ENCODE measurements at regions of chr11 and their contacts with region 1.

Region 1: DNA sequence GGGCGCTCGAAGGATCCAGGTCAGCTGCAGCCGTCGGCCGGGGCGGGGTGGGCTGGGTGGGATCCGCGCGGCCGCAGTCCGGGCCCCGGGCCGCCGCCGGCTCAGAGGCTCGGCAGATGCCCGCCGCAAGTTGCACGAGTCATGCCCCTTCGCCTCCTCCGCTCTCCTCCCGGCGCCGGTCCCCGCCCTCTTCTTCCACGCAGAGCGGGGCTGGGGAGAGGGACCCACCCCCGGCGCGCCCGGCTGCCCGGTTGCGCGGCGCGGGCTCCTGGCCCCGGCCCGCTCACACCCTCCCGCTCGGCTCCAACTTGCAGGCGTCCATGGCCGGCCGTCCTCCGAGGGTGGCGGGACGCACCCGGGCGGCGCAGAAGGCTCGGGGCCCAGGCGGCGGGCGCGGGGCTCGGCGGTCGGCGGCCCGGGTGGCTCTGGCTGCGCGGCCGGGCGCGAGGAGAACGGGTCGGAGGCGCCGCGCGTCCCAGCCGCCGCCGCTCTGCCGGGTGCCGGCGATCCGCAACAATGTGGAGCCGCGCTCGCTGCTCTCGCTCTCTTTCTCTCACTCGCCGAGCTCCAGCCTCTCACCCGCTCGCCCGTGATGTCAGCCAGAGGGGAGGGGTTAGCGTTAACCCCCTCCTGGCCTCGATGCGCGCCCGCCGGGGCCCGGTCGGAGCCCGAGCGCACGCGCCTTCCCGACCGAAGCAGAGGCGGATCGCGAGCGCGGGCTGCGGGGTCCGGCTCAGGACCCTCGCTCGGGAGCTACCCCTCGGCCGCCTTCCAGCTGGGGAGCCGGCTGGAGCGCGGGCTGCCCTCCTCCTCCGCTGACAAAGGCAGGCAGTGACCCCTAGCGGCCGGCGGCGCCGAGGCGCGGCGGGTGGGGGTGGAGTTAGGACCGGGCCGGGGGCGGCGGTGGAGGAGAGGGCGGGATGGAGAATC is at the start of gene NECTIN1:
- DNase-seq: peak; percentile 84 to 88 (median 86)
- H3K4me3 ChIP-seq: peak within 1 kb of the TSS; percentile 47 to 69
- H3K4me3 Mint-ChIP-seq: peak within 1 kb of the TSS; percentile 93 to 98 (median 95)
- H3K27ac ChIP-seq: peak within 1 kb of the TSS; percentile 37
- H3K27ac Mint-ChIP-seq: peak within 1 kb of the TSS; percentile 80 to 95 (median 89)
- H3K4me1 ChIP-seq: peaks cover 20% of the 10 kb centered on the region
- H3K4me1 Mint-ChIP-seq: peaks cover 6 to 22% (median 14%) of the 10 kb centered on the region in 4 donors
- H3K27me3 ChIP-seq: peaks cover 10% of the 10 kb centered on the region
- H3K27me3 Mint-ChIP-seq: peaks cover 10 to 13% of the 10 kb centered on the region in 2 donors
- total RNA-seq, gene NECTIN1: 3.5 to 3.8 TPM

Region 2: DNA sequence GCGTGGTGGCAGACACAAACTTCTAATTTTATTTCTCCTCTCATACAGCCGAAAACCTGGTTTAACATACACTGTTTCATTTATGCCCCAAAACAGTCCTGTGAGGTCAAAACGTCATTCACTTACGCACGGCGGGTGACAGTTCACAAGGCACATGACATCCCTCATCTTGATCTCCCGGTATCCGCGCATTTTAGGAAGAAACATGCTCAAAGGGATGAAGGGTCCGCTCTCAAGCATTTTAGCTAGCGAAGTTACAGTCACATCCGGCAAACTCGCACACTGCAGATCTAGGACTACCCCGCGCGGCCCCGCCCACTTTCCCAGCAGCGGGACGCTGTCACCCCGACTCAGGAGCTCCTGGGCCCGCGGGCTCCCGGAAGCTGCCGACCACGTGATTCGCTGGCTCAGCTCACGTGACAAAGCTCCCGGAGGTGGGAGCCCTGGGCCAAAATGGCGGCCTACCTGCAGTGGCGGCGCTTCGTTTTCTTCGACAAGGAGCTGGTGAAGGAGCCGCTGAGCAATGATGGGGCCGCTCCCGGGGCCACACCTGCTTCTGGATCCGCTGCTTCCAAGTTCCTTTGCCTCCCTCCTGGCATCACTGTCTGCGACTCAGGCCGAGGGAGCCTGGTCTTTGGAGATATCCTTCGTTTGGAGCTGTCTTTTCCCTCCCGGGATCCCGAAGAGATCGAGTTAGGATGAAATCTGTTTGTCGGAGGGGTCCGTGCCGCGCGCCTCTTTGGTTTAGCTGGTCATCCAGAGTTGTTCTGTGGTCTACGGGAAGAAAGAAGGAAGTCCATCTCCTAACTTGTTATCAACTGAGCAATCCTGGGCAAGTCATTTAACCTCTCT is 661.3 kb before region 1 on chr11 and contains the start of gene VPS11:
- CTCF ChIA-PET with region 1: no interaction called
- POLR2A ChIA-PET with region 1: no interaction called
- intact Hi-C with region 1: no loop called
- DNase-seq: peak; percentile 97 to 98 (median 97)
- H3K4me3 ChIP-seq: peak within 1 kb of the TSS; percentile 87 to 99
- H3K4me3 Mint-ChIP-seq: peak within 1 kb of the TSS; percentile 91 to 99 (median 94)
- H3K27ac ChIP-seq: peak within 1 kb of the TSS; percentile 88
- H3K27ac Mint-ChIP-seq: peak within 1 kb of the TSS; percentile 92 to 100 (median 98)
- H3K4me1 ChIP-seq: peaks cover 34% of the 10 kb centered on the region
- H3K4me1 Mint-ChIP-seq: peaks cover 23 to 43% (median 36%) of the 10 kb centered on the region in 4 donors
- H3K27me3 ChIP-seq: no peaks in the 10 kb centered on the region
- H3K27me3 Mint-ChIP-seq: no peaks in the 10 kb centered on the region
- total RNA-seq, gene VPS11: 56.2 to 61.2 TPM

Region 3: GRCh38 chr11:119481021-119481666 is 247.8 kb before region 1 on chr11:
- CTCF ChIA-PET with region 1: interaction called, 3 read pairs
- POLR2A ChIA-PET with region 1: no interaction called
- intact Hi-C with region 1: loop called (anchors 5 kb)
- DNase-seq: peak in 4 of 5 donors; percentile 38 to 52 (median 48)
- H3K4me3 ChIP-seq: no peak overlapping the region
- H3K4me3 Mint-ChIP-seq: no peak overlapping the region
- H3K27ac ChIP-seq: no peak overlapping the region
- H3K27ac Mint-ChIP-seq: no peak overlapping the region
- H3K4me1 ChIP-seq: peaks cover 7% of the 10 kb centered on the region
- H3K4me1 Mint-ChIP-seq: peaks cover 0 to 4% (median 0%) of the 10 kb centered on the region in 4 donors
- H3K27me3 ChIP-seq: no peaks in the 10 kb centered on the region
- H3K27me3 Mint-ChIP-seq: peaks cover 8 to 31% of the 10 kb centered on the region in 2 donors

Region 4: DNA sequence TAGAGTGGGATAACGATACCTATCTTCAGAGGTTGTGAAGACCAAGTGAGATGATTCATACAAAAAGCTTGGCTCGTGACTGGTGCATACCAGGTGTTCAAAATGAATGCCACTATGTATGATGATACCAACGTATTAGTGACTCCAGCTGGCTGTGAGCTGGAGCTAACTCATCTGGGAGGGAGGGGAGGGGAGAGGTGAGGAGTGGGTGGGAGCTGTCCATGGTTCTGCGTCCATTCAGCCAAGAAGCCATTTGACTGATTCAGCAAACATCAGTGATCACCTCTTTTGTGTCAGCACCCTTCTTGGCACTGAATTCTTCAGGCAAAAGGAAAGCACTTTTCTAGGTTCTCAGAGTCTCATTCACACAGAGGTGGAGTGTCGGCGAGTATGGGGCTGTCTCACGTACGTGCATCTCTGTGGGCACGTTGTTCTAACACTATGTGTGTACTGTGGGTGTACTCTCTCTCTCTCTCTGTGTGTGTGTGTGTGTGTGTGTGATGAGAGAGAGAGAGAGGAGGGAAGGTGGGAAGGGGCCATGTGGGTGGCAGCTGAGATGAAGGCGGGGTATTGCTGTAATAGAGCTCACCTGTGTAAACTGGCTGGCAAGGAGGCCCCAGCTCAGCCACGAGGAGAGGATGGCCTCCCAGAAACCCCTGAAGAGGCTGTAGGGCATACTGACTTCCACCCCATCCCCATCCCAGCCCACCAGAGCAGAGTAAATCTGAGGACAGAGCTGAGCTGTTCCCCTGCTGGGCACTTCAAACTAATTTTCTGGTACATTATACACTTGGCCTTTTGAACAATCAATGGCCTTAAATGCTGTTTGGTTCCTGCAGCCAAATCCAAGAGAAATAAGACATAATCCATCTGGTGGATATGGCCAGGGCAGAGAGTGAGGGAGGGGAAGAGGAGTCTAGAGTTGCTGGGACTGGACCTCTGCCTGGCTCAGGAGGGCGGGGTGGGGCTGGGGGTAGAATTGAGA is 209.9 kb before region 1 on chr11:
- CTCF ChIA-PET with region 1: no interaction called
- POLR2A ChIA-PET with region 1: no interaction called
- intact Hi-C with region 1: no loop called
- DNase-seq: no peak
- H3K4me3 ChIP-seq: no peak overlapping the region
- H3K4me3 Mint-ChIP-seq: no peak overlapping the region
- H3K27ac ChIP-seq: no peak overlapping the region
- H3K27ac Mint-ChIP-seq: no peak overlapping the region
- H3K4me1 ChIP-seq: no peaks in the 10 kb centered on the region
- H3K4me1 Mint-ChIP-seq: no peaks in the 10 kb centered on the region
- H3K27me3 ChIP-seq: no peaks in the 10 kb centered on the region
- H3K27me3 Mint-ChIP-seq: peaks cover 7 to 32% of the 10 kb centered on the region in 2 donors

Region 5: GRCh38 chr11:119641983-119642745 is 86.8 kb before region 1 on chr11:
- CTCF ChIA-PET with region 1: interaction called, 16 read pairs
- POLR2A ChIA-PET with region 1: no interaction called
- intact Hi-C with region 1: loop called (anchors 1 kb)
- DNase-seq: no peak
- H3K4me3 ChIP-seq: no peak overlapping the region
- H3K4me3 Mint-ChIP-seq: no peak overlapping the region
- H3K27ac ChIP-seq: no peak overlapping the region
- H3K27ac Mint-ChIP-seq: no peak overlapping the region
- H3K4me1 ChIP-seq: no peaks in the 10 kb centered on the region
- H3K4me1 Mint-ChIP-seq: no peaks in the 10 kb centered on the region
- H3K27me3 ChIP-seq: no peaks in the 10 kb centered on the region
- H3K27me3 Mint-ChIP-seq: peaks cover 2 to 4% of the 10 kb centered on the region in 2 donors

Region 6: DNA sequence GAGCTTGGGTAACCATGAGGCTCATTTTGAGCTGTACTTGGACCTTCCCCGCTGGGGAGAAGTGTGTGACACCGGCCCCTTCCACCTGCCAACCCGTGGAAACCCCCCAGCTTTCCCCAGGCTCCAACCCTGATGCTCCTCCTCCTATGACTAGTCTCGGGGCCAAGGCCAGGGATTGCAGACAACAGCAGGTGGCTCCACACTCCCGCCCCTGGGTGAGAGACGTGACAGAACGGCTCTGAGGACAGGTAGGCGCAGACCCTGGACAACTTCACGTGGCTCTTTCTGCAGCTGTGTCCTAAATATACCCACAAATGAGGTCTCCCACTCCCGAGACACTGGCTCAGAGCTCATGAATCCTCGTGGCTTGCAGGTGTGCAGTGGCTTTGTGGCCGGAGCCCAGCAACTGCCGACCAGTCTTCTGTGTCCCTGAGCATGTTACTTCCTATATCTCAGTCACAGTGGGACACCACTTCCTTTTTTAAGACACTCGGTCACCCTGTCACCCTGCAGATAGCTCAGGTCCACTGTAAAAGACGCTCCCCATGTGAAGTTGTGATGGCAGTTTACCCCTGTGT is 55.1 kb before region 1 on chr11:
- CTCF ChIA-PET with region 1: interaction called, 30 read pairs
- POLR2A ChIA-PET with region 1: no interaction called
- intact Hi-C with region 1: no loop called
- DNase-seq: no peak
- H3K4me3 ChIP-seq: no peak overlapping the region
- H3K4me3 Mint-ChIP-seq: peak overlapping the region in 1 of 8 donors; percentile 23
- H3K27ac ChIP-seq: no peak overlapping the region
- H3K27ac Mint-ChIP-seq: no peak overlapping the region
- H3K4me1 ChIP-seq: no peaks in the 10 kb centered on the region
- H3K4me1 Mint-ChIP-seq: peaks cover 0 to 9% (median 4%) of the 10 kb centered on the region in 4 donors
- H3K27me3 ChIP-seq: no peaks in the 10 kb centered on the region
- H3K27me3 Mint-ChIP-seq: no peaks in the 10 kb centered on the region

Region 7: DNA sequence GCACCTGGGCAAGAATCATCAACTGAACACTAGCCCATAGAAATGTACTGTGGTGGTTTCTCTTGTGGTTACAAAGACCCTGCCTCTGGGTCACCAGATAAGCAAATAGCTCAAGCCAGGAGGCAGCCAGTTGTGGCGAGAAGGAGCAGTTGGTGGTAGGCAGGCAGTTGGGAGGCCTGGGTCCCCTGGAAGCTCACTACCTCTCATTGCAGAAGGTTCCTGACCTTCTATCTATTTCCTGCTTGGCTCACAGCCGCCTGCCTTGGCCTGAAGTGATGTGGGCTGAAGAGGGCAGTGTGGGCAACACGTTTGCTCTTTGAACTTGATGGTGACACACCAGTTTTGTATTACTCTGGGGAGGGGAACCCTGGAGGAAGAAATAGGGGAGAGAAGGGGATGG is 34.6 kb before region 1 on chr11:
- CTCF ChIA-PET with region 1: interaction called, 12 read pairs
- POLR2A ChIA-PET with region 1: no interaction called
- intact Hi-C with region 1: no loop called
- DNase-seq: no peak
- H3K4me3 ChIP-seq: no peak overlapping the region
- H3K4me3 Mint-ChIP-seq: no peak overlapping the region
- H3K27ac ChIP-seq: no peak overlapping the region
- H3K27ac Mint-ChIP-seq: peak overlapping the region in 1 of 7 donors; percentile 70
- H3K4me1 ChIP-seq: peaks cover 15% of the 10 kb centered on the region
- H3K4me1 Mint-ChIP-seq: peaks cover 8 to 37% (median 20%) of the 10 kb centered on the region in 4 donors
- H3K27me3 ChIP-seq: no peaks in the 10 kb centered on the region
- H3K27me3 Mint-ChIP-seq: no peaks in the 10 kb centered on the region

Region 8: DNA sequence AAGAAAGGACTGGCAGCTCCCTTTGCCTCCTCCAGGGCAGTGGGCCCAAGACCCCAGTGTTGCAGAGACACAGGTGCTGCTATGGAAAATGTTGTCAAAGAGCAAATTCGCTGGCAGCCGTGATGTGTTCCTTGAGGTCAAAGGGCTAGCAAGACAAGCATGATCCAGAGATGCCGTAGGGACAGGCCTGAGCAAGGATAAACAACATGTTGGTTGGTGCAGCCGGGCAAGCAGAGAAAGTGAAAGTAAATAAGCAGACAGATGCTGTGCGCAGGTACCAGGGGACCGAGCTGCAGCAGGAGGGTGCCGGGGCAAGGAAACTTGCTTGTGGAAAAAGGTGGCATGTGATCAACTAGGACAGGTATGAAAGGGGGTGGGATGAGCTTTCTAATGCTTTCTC is 125.6 kb after region 1 on chr11:
- CTCF ChIA-PET with region 1: no interaction called
- POLR2A ChIA-PET with region 1: no interaction called
- intact Hi-C with region 1: no loop called
- DNase-seq: no peak
- H3K4me3 ChIP-seq: no peak overlapping the region
- H3K4me3 Mint-ChIP-seq: no peak overlapping the region
- H3K27ac ChIP-seq: no peak overlapping the region
- H3K27ac Mint-ChIP-seq: peak overlapping the region in 1 of 7 donors; percentile 10
- H3K4me1 ChIP-seq: no peaks in the 10 kb centered on the region
- H3K4me1 Mint-ChIP-seq: peaks cover 0 to 4% (median under 1%) of the 10 kb centered on the region in 4 donors
- H3K27me3 ChIP-seq: no peaks in the 10 kb centered on the region
- H3K27me3 Mint-ChIP-seq: peaks cover 7 to 18% of the 10 kb centered on the region in 2 donors

Measured in CD4-positive, alpha-beta memory T cell (primary cell).